Ovary (tissue), 10 donors: ENCODE measurements at regions of chrX and their contacts with region 1.

Region 1: GRCh38 chrX:140701480-140701879 is 8.1 kb upstream of the LINC00632 start:
- DNase-seq: no peak
- H3K4me3 ChIP-seq: no peak overlapping the region
- H3K27ac ChIP-seq: no peak overlapping the region
- H3K4me1 ChIP-seq: no peaks in the 10 kb centered on the region
- H3K27me3 ChIP-seq: no peaks in the 10 kb centered on the region
- CTCF ChIP-seq: no peak
- EP300 ChIP-seq: no peak
- POLR2A ChIP-seq: no peak

Region 2: DNA sequence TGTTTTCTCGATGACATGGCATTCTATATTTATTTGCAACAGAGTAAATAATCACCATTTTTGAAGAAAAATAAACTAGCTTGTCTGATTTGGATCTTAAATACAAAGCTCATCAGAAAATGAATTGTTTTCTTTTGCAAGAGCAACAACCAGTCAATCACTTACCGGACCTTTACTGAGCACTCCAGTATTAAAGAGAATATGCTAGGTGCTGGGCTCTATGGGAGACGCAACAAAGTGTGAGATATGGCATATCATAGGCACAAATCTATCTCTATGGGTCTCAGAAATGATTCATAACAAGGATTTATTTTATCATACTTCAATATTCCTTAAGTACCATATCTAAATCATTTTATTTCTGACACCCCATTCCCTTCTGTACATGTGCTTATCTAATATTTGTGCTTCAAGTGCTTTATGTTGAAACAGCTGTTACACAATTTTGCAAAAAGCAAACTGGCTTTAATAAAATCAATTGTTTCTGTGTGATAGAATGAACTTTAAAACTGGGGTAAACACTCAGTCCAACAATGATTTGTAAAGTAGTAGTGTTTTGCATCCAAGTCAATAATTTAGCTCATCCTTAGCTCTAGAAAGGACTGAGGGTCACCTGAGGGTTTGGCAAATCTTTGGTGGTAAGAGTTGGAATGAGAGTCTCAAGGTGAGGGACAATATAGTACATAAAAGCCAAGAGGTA is 212.5 kb after region 1 on chrX:
- intact Hi-C with region 1: loop called in 1 of 4 experiments (anchors 10 kb)
- DNase-seq: no peak
- H3K4me3 ChIP-seq: no peak overlapping the region
- H3K27ac ChIP-seq: no peak overlapping the region
- H3K4me1 ChIP-seq: no peaks in the 10 kb centered on the region
- H3K27me3 ChIP-seq: no peaks in the 10 kb centered on the region
- CTCF ChIP-seq: no peak
- EP300 ChIP-seq: no peak
- POLR2A ChIP-seq: no peak

Region 3: GRCh38 chrX:141396536-141396935 is 695.1 kb after region 1 on chrX:
- intact Hi-C with region 1: no loop called
- DNase-seq: no peak
- H3K4me3 ChIP-seq: no peak overlapping the region
- H3K27ac ChIP-seq: no peak overlapping the region
- H3K4me1 ChIP-seq: no peaks in the 10 kb centered on the region
- H3K27me3 ChIP-seq: no peaks in the 10 kb centered on the region
- CTCF ChIP-seq: no peak
- EP300 ChIP-seq: no peak
- POLR2A ChIP-seq: no peak